H1 (cell line): ENCODE measurements at regions of chr16 and their contacts with region 1.

Region 1: DNA sequence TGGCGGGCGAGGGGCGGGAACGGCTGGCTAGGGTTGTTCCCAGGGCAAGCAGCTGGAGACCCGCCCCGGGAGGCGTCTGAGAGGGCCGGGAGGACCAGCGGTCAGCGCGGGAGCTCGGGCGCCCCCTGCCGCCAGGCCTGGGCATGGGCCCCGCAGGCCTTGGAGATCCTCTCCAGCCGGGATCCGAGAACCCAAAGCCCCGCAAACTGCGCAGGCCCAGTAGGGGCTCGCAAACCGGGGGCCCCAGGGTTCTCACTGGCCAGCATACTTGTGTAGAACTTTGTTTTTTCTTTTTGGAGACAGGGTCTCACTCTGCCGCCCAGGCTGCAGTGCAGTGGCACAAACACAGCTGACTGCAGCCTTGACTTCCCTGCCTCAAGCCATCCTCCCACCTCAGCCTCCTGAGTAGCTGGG is 20.8 kb upstream of the ZNF423 start:
- DNase-seq: peak; percentile 69 to 99
- H3K4me3 ChIP-seq: peak overlapping the region in 3 of 4 experiments; percentile 18 to 58 (median 45); a peak in 5 of 8 replicates
- H3K27ac ChIP-seq: no peak overlapping the region
- H3K4me1 ChIP-seq: peaks cover 0 to 8% (median 5%) of the 10 kb centered on the region in 4 experiments; a peak in 4 of 7 replicates
- H3K27me3 ChIP-seq: peaks cover 0 to 10% (median 4%) of the 10 kb centered on the region in 4 experiments; a peak in 3 of 7 replicates
- CTCF ChIP-seq: peak; percentile 83 to 89 (median 86)
- EP300 ChIP-seq: 0 out of 3 replicates have a peak, but pooled peaks of 1 of the 2 experiments have one; percentile 35
- POLR2A ChIP-seq: no peak
- RAD21 ChIP-seq: peak; percentile 50 to 67; a peak in 3 of 4 replicates

Region 2: DNA sequence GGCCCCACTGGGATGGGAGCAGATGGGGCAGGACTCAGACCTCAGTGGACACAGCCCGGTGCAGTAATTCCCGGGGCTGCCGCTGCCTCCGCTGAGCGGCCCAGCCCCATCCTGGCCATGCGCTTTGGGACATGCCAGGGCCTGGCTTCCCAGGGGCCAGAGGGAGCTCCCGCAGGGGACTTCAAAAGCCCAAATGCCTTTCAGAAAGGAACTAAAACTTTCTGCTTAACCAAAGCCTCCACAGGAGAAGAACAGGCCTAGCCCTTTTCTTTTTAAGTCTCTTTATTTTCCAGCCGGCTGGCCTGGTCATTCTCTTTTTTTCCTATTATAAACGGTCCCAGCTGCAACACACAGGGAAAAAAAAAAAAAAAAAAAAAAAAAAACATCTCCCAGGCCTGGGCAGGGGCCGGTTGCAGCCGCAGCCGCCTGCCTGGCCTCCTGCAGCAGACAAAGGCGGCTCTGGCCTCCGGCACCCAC is 10.1 kb before region 1 on chr16:
- CTCF ChIA-PET with region 1: interaction called, 126 read pairs
- POLR2A ChIA-PET with region 1: interaction called, 7 read pairs
- DNase-seq: peak in 1 of 2 experiments; percentile 63
- H3K4me3 ChIP-seq: peak overlapping the region in 1 of 4 experiments; percentile 2; a peak in 1 of 8 replicates
- H3K27ac ChIP-seq: no peak overlapping the region
- H3K4me1 ChIP-seq: peaks cover 7 to 21% (median 16%) of the 10 kb centered on the region in 4 experiments
- H3K27me3 ChIP-seq: peaks cover 0 to 6% (median 2%) of the 10 kb centered on the region in 4 experiments; a peak in 4 of 7 replicates
- CTCF ChIP-seq: no peak
- EP300 ChIP-seq: no peak
- POLR2A ChIP-seq: no peak
- RAD21 ChIP-seq: peak; percentile 5 to 19; a peak in 1 of 4 replicates

Region 3: DNA sequence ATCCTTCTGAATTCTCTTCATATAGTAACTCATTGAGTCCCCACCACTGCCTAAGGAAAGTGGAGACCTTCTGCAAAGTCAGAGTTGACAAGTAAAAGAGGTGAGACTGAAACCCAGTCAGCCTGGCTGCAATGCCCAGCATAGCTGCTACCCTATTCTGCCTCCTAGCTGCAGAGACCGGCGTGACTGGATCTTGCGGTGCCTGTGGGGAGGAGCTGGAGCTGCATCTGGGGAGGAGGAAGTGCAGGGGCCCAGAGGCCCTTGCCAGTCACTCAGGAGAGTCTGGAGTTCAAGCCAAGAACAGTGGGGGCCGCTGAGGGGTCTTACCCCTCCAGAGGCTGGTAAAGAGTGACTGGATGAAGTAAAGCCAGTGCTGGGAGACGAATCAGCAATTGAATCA is 14.2 kb after region 1 on chr16:
- CTCF ChIA-PET with region 1: interaction called, 99 read pairs
- POLR2A ChIA-PET with region 1: interaction called, 5 read pairs
- DNase-seq: peak; percentile 38 to 84
- H3K4me3 ChIP-seq: no peak overlapping the region
- H3K27ac ChIP-seq: no peak overlapping the region
- H3K4me1 ChIP-seq: no peaks in the 10 kb centered on the region; a peak in 1 of 7 replicates
- H3K27me3 ChIP-seq: no peaks in the 10 kb centered on the region; a peak in 1 of 7 replicates
- CTCF ChIP-seq: peak; percentile 92 to 96 (median 93)
- EP300 ChIP-seq: no peak
- POLR2A ChIP-seq: no peak
- RAD21 ChIP-seq: peak; percentile 83 to 87

Region 4: DNA sequence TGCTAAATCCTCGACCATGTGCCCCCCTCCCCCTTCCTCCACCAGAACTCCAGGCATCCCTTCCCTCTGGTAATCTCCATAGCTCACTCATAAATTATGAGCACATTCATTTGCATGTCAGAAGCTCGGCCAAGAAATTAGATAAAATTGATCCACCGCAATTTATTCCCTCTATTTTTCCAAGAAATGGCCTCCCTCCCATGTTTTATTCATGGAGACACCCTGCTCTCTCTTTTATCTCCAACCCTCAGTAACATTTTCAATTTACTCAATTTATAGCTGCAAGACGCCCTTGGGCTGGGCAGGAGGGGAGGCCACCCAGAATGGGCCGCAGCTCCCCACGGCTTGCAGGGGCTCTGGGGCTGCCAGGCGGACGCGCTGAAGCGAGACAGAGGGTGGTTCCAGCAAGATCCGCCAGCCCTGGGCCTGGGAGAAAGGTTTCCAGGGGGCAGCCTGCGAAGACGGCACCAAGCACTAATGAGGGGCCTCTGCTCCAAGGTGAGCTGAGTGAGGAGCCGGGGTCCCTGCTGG is 33.9 kb after region 1 on chr16:
- CTCF ChIA-PET with region 1: interaction called, 16 read pairs
- POLR2A ChIA-PET with region 1: no interaction called
- DNase-seq: peak in 1 of 2 experiments; percentile 49
- H3K4me3 ChIP-seq: no peak overlapping the region
- H3K27ac ChIP-seq: no peak overlapping the region
- H3K4me1 ChIP-seq: no peaks in the 10 kb centered on the region; a peak in 2 of 7 replicates
- H3K27me3 ChIP-seq: no peaks in the 10 kb centered on the region
- CTCF ChIP-seq: no peak
- EP300 ChIP-seq: no peak
- POLR2A ChIP-seq: no peak
- RAD21 ChIP-seq: no peak

Region 5: GRCh38 chr16:49969091-49970030 is 92.6 kb after region 1 on chr16:
- CTCF ChIA-PET with region 1: no interaction called
- POLR2A ChIA-PET with region 1: no interaction called
- DNase-seq: no peak
- H3K4me3 ChIP-seq: no peak overlapping the region
- H3K27ac ChIP-seq: no peak overlapping the region
- H3K4me1 ChIP-seq: no peaks in the 10 kb centered on the region
- H3K27me3 ChIP-seq: no peaks in the 10 kb centered on the region
- CTCF ChIP-seq: no peak
- EP300 ChIP-seq: no peak
- POLR2A ChIP-seq: no peak
- RAD21 ChIP-seq: no peak

Region 6: DNA sequence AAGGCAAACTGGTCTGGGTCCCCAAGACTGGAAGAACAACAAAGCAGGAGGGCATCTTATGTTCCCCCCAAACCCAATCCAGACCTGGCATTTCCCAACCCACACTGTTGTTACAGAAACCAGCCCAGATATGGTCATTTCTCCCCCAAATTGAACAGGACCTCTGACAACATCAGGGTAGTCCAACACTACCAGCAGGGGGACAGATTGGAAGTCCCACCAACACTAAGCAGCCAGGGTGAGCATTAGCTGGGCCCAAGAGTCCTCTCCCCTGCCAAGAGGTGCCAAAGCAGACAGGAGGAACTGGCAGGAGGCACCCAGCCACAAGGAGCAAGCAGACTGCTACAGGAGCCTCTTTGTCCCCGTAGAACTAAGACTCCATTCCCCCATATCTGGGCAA is 119.0 kb after region 1 on chr16:
- CTCF ChIA-PET with region 1: no interaction called
- POLR2A ChIA-PET with region 1: no interaction called
- DNase-seq: no peak
- H3K4me3 ChIP-seq: no peak overlapping the region
- H3K27ac ChIP-seq: no peak overlapping the region
- H3K4me1 ChIP-seq: no peaks in the 10 kb centered on the region
- H3K27me3 ChIP-seq: no peaks in the 10 kb centered on the region
- CTCF ChIP-seq: no peak
- EP300 ChIP-seq: no peak
- POLR2A ChIP-seq: no peak
- RAD21 ChIP-seq: no peak